Vagina (tissue), 2 donors: ENCODE measurements at regions of chr17 and their contacts with region 1.

Region 1: GRCh38 chr17:45221066-45221996 is at the start of gene FMNL1:
- DNase-seq: no peak
- H3K4me3 ChIP-seq: peak within 1 kb of the TSS; percentile 53 to 92
- H3K27ac ChIP-seq: peak within 1 kb of the TSS; percentile 85
- H3K4me1 ChIP-seq: peaks cover 36% of the 10 kb centered on the region
- H3K27me3 ChIP-seq: no peaks in the 10 kb centered on the region
- CTCF ChIP-seq: no peak
- POLR2A ChIP-seq: no peak
- total RNA-seq, gene FMNL1: 22.1 TPM

Region 2: GRCh38 chr17:45261577-45262515 is 40.5 kb after region 1 on chr17 and contains the start of gene SPATA32:
- intact Hi-C with region 1: no loop called
- DNase-seq: no peak
- H3K4me3 ChIP-seq: peak within 1 kb of the TSS; percentile 68
- H3K27ac ChIP-seq: peak within 1 kb of the TSS; percentile 66
- H3K4me1 ChIP-seq: peaks cover 28% of the 10 kb centered on the region
- H3K27me3 ChIP-seq: no peaks in the 10 kb centered on the region
- CTCF ChIP-seq: no peak
- POLR2A ChIP-seq: no peak
- total RNA-seq, gene SPATA32: not detected

Region 3: DNA sequence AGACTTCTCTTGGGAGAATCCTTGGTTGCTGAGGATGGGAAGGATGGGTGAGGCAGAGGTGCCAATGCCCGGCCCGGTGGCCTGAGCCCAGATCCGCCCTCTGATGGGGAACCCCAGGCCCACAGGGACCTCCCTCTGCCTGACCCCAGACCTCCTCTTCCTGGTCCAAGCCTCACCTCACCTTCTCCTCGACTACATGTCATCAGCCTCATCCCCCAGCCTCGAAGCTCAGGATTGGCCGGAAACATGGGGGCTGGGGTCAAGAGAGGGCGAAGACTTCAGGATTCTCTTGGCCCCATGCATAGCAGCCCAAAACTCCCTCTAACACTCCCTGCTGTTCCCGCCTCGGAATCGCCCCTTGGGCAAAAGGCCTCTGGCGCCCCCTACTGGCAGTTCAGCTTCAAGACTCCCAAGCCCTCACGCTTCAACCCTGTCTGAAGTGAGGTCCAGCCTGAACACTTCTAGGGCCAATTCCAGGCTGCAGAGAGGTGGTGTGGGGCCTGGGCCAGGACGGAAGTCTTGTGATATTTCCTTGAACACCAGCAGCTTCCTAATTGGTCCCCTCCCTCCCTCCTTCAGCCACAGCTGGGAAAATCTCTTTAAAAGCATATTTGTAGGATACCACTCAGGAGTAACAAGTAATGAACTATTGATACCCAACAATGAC is 164.1 kb after region 1 on chr17:
- intact Hi-C with region 1: loop called (anchors 5 kb)
- DNase-seq: no peak
- H3K4me3 ChIP-seq: no peak overlapping the region
- H3K27ac ChIP-seq: no peak overlapping the region
- H3K4me1 ChIP-seq: peaks cover 4% of the 10 kb centered on the region
- H3K27me3 ChIP-seq: no peaks in the 10 kb centered on the region
- CTCF ChIP-seq: peak; percentile 95 to 98 (median 95)
- POLR2A ChIP-seq: no peak

Region 4: GRCh38 chr17:45656527-45657181 is 435.3 kb after region 1 on chr17:
- intact Hi-C with region 1: loop called (anchors 5 kb)
- DNase-seq: no peak
- H3K4me3 ChIP-seq: no peak overlapping the region
- H3K27ac ChIP-seq: no peak overlapping the region
- H3K4me1 ChIP-seq: no peaks in the 10 kb centered on the region
- H3K27me3 ChIP-seq: no peaks in the 10 kb centered on the region
- CTCF ChIP-seq: no peak
- POLR2A ChIP-seq: no peak